Activated B cell treated with CpG ODN at 0.5 μM for 24 hours (primary cell): ENCODE measurements at regions of chr16 and their contacts with region 1.

Region 1: GRCh38 chr16:2009789-2010510 is at the start of gene ZNF598:
- DNase-seq: peak; percentile 83
- ATAC-seq: peak; percentile 94
- H3K4me3 Mint-ChIP-seq: peak within 1 kb of the TSS; percentile 92
- H3K27ac Mint-ChIP-seq: peak within 1 kb of the TSS; percentile 90
- H3K4me1 Mint-ChIP-seq: peaks cover 41% of the 10 kb centered on the region
- H3K27me3 Mint-ChIP-seq: no peaks in the 10 kb centered on the region
- CTCF ChIP-seq: no peak
- total RNA-seq, gene ZNF598: 56.4 and 59.3 TPM in 2 replicates

Region 2: DNA sequence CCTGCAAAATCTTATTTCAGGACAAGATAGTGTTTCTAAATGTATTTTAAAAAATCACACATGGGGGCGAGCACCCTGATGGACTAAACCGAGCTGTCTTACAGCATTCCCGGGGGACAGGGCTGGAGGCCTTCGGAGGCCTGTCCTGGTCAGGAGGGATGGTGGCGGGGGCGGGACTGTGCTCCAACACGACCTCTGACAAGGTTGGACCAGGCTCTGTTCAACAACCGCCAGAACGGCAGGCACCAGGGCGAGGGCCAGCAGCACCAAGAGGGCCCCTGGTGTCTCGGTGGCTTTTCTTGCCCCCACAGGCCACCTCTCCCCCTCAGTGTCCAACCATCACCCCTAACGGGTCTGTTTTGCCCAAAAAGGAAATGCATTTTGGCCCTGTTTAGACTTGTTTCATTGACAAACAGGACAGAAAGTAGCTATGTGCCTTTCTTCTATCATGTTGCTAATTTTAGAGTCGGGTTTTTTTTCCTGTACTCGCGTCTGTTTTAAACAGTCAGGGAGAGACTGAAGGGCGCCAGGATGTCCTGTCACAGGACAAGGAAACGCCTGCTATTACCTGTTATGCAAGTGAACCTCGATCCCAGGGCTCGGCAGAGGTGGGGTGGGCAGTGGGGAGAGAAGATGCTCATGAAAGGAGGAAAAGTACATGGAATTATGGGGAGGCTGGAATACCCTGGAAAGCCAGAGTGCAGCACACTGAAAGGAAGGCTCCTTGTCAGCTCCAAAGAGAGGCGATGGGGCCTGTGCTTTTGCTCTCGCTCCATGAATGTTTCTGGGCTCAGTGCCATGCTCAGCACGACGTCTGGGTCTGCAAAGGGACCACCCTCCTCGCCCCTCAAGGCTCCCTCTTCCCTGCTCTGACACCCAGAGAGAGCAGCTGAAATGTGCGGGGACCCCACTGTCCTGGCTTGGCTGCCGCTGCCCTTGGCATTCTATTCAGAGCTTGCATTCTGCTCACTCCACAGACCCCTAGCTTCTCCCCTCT is 464.6 kb before region 1 on chr16:
- CTCF ChIA-PET with region 1: no interaction called
- POLR2A ChIA-PET with region 1: interaction called, 10 read pairs
- intact Hi-C with region 1: no loop called
- DNase-seq: no peak
- ATAC-seq: no peak
- H3K4me3 Mint-ChIP-seq: no peak overlapping the region
- H3K27ac Mint-ChIP-seq: no peak overlapping the region
- H3K4me1 Mint-ChIP-seq: peaks cover 24% of the 10 kb centered on the region
- H3K27me3 Mint-ChIP-seq: no peaks in the 10 kb centered on the region
- CTCF ChIP-seq: no peak

Region 3: GRCh38 chr16:1991948-1992703 is 17.8 kb before region 1 on chr16:
- CTCF ChIA-PET with region 1: interaction called, 3 read pairs
- POLR2A ChIA-PET with region 1: interaction called, 20 read pairs
- intact Hi-C with region 1: loop called (anchors 1 kb)
- DNase-seq: peak; percentile 95
- ATAC-seq: peak; percentile 79
- H3K4me3 Mint-ChIP-seq: peak overlapping the region; percentile 82
- H3K27ac Mint-ChIP-seq: peak overlapping the region; percentile 88
- H3K4me1 Mint-ChIP-seq: peaks cover 29% of the 10 kb centered on the region
- H3K27me3 Mint-ChIP-seq: no peaks in the 10 kb centered on the region
- CTCF ChIP-seq: no peak

Region 4: GRCh38 chr16:2023098-2023925 is 13.4 kb after region 1 on chr16:
- CTCF ChIA-PET with region 1: no interaction called
- POLR2A ChIA-PET with region 1: no interaction called
- intact Hi-C with region 1: loop called (anchors 2 kb)
- DNase-seq: peak; percentile 97
- ATAC-seq: peak; percentile 94
- H3K4me3 Mint-ChIP-seq: peak overlapping the region; percentile 79
- H3K27ac Mint-ChIP-seq: peak overlapping the region; percentile 73
- H3K4me1 Mint-ChIP-seq: peaks cover 24% of the 10 kb centered on the region
- H3K27me3 Mint-ChIP-seq: peaks cover 27% of the 10 kb centered on the region
- CTCF ChIP-seq: peak; percentile 82

Region 5: GRCh38 chr16:2047330-2048115 is 37.6 kb after region 1 on chr16 and contains the starts of genes NTHL1 and TSC2:
- CTCF ChIA-PET with region 1: no interaction called
- POLR2A ChIA-PET with region 1: no interaction called
- intact Hi-C with region 1: loop called (anchors 1 kb)
- DNase-seq: peak; percentile 93
- ATAC-seq: peak; percentile 95
- H3K4me3 Mint-ChIP-seq: peak within 1 kb of the TSS; percentile 89
- H3K27ac Mint-ChIP-seq: peak within 1 kb of the TSS; percentile 66
- H3K4me1 Mint-ChIP-seq: peaks cover 24% of the 10 kb centered on the region
- H3K27me3 Mint-ChIP-seq: no peaks in the 10 kb centered on the region
- CTCF ChIP-seq: no peak
- total RNA-seq, gene NTHL1: 10.5 and 11.5 TPM in 2 replicates
- total RNA-seq, gene TSC2: 130 and 139 TPM in 2 replicates

Region 6: GRCh38 chr16:2205104-2205966 is 195.4 kb after region 1 on chr16 and contains the start of gene MLST8:
- CTCF ChIA-PET with region 1: no interaction called
- POLR2A ChIA-PET with region 1: no interaction called
- intact Hi-C with region 1: loop called (anchors 5 kb)
- DNase-seq: peak; percentile 99
- ATAC-seq: peak; percentile 90
- H3K4me3 Mint-ChIP-seq: peak within 1 kb of the TSS; percentile 84
- H3K27ac Mint-ChIP-seq: peak within 1 kb of the TSS; percentile 86
- H3K4me1 Mint-ChIP-seq: peaks cover 19% of the 10 kb centered on the region
- H3K27me3 Mint-ChIP-seq: no peaks in the 10 kb centered on the region
- CTCF ChIP-seq: no peak
- total RNA-seq, gene MLST8: 35.7 and 38.7 TPM in 2 replicates

Region 7: GRCh38 chr16:2682209-2683021 is 672.5 kb after region 1 on chr16 and contains the start of gene KCTD5:
- CTCF ChIA-PET with region 1: no interaction called
- POLR2A ChIA-PET with region 1: no interaction called
- intact Hi-C with region 1: loop called (anchors 5 kb)
- DNase-seq: peak; percentile 93
- ATAC-seq: peak; percentile 85
- H3K4me3 Mint-ChIP-seq: peak within 1 kb of the TSS; percentile 96
- H3K27ac Mint-ChIP-seq: peak within 1 kb of the TSS; percentile 92
- H3K4me1 Mint-ChIP-seq: peaks cover 31% of the 10 kb centered on the region
- H3K27me3 Mint-ChIP-seq: no peaks in the 10 kb centered on the region
- CTCF ChIP-seq: no peak
- total RNA-seq, gene KCTD5: 30.3 and 31.4 TPM in 2 replicates